ENCODE measurements at regions of chr1 and their contacts with region 1.

Region 1: DNA sequence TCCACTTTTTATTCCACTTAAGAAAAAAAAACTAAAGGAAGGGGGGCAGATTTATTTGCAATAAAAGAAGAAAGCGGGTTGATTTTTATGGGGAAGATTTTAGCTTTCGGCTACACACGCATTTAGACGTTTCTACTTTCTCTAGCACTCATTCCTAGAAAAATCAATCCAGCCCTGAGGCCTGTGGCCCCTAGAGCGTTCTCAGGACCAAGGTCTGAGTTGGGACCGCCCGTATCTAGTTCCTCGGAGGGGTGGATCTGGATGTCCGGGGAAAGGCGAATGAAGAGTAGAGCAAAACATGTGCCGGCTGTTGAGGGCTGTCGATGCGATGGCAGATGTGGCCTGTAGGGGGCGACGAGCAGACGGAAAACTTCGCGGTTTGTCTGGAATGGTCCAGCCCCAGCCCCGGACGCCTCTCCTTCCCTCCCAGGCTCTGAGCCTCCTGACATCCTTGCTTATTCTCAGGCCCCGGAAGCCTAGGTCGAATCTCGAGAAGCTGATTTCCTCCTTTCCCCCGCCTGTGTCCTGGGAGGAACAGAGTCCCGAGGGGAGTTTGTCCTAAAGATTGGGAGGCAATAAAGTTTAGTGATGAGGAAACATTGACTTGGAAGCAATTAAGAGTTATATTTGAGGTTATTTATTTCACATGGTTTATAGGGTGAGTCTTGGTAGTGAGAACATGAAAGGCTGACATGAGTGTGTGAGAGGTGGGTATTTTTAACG is 5.2 kb downstream of the FOXD3 start:
- DNase-seq: peak; percentile 62
- ATAC-seq: peak; percentile 87
- H3K4me3 ChIP-seq: no peak overlapping the region
- H3K27ac ChIP-seq: no peak overlapping the region
- H3K4me1 ChIP-seq: no peaks in the 10 kb centered on the region; the same call in 1 of the 2 replicates
- H3K27me3 ChIP-seq: peaks cover 80% of the 10 kb centered on the region
- CTCF ChIP-seq: peak; percentile 78
- POLR2A ChIP-seq: no peak
- RAD21 ChIP-seq: peak; percentile 57

Region 2: GRCh38 chr1:62953633-62954032 is 373.9 kb before region 1 on chr1:
- CTCF ChIA-PET with region 1: no interaction called
- POLR2A ChIA-PET with region 1: no interaction called
- dilution Hi-C with region 1: no loop called
- in situ Hi-C with region 1: no loop called
- intact Hi-C with region 1: no loop called
- DNase-seq: no peak
- ATAC-seq: no peak
- H3K4me3 ChIP-seq: no peak overlapping the region
- H3K27ac ChIP-seq: no peak overlapping the region
- H3K4me1 ChIP-seq: no peaks in the 10 kb centered on the region
- H3K27me3 ChIP-seq: peaks cover 3% of the 10 kb centered on the region; the same call in 1 of the 2 replicates
- CTCF ChIP-seq: no peak
- POLR2A ChIP-seq: no peak
- RAD21 ChIP-seq: no peak

Region 3: DNA sequence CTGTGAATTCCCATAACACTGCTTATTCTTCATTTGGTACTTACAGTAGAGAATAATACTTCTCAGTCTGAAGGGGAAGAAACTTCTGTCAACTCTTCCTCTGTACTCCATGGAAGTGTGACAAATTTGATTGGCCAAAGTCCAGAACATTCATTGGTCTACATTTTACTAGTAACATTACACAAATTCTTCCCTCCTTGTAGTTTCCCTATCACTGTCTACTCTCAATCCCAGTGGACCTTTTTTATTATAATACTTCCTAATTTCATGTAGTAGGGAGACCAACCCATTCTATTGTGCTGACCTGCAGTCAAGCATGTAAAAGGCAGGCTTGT is 114.5 kb after region 1 on chr1:
- CTCF ChIA-PET with region 1: interaction called, 8 read pairs
- POLR2A ChIA-PET with region 1: no interaction called
- dilution Hi-C with region 1: no loop called
- in situ Hi-C with region 1: no loop called
- intact Hi-C with region 1: loop called (anchors 2 kb)
- DNase-seq: peak; percentile 12
- ATAC-seq: peak; percentile 18; the same call in 1 of the 2 replicates
- H3K4me3 ChIP-seq: no peak overlapping the region
- H3K27ac ChIP-seq: no peak overlapping the region
- H3K4me1 ChIP-seq: peaks cover 2% of the 10 kb centered on the region; the same call in 1 of the 2 replicates
- H3K27me3 ChIP-seq: no peaks in the 10 kb centered on the region
- CTCF ChIP-seq: no peak
- POLR2A ChIP-seq: no peak
- RAD21 ChIP-seq: no peak

Region 4: DNA sequence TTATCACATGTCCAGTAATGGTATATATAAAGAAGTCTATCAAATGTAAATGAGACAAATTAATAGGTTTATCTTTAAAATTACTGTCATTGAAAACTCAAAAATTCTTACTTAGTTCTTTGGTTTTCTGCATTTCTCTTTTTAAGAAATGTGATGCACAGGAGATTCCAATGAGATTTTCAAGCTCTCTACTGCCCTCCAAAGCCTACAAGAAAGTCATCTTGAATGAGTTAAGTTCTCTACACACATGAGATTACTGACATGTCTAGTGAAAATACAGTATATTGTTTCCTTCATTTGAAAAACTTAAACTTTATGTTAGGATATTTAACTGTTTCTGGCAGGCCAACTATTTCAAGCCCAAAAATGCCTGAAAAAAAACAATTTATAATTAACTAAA is 126.7 kb after region 1 on chr1:
- CTCF ChIA-PET with region 1: no interaction called
- POLR2A ChIA-PET with region 1: no interaction called
- dilution Hi-C with region 1: no loop called
- in situ Hi-C with region 1: loop called (anchors 10 kb)
- intact Hi-C with region 1: no loop called
- DNase-seq: peak; percentile 43
- ATAC-seq: peak; percentile 69; the same call in 1 of the 2 replicates
- H3K4me3 ChIP-seq: no peak overlapping the region
- H3K27ac ChIP-seq: no peak overlapping the region
- H3K4me1 ChIP-seq: no peaks in the 10 kb centered on the region; the same call in 1 of the 2 replicates
- H3K27me3 ChIP-seq: no peaks in the 10 kb centered on the region
- CTCF ChIP-seq: peak; percentile 37
- POLR2A ChIP-seq: no peak
- RAD21 ChIP-seq: no peak

Region 5: GRCh38 chr1:63522891-63523728 is 195.5 kb after region 1 on chr1 and contains the starts of genes EFCAB7 and ITGB3BP:
- CTCF ChIA-PET with region 1: interaction called, 3 read pairs
- POLR2A ChIA-PET with region 1: no interaction called
- dilution Hi-C with region 1: no loop called
- in situ Hi-C with region 1: loop called (anchors 10 kb)
- intact Hi-C with region 1: loop called (anchors 5 kb)
- DNase-seq: peak; percentile 96
- ATAC-seq: peak; percentile 94
- H3K4me3 ChIP-seq: peak within 1 kb of the TSS; percentile 66
- H3K27ac ChIP-seq: peak within 1 kb of the TSS; percentile 85
- H3K4me1 ChIP-seq: no peaks in the 10 kb centered on the region
- H3K27me3 ChIP-seq: no peaks in the 10 kb centered on the region
- CTCF ChIP-seq: no peak
- POLR2A ChIP-seq: no peak; the same call in 1 of the 2 replicates
- RAD21 ChIP-seq: no peak
- total RNA-seq, gene EFCAB7: 2.3 and 6.7 TPM in 2 replicates
- total RNA-seq, gene ITGB3BP: 8.1 and 15.8 TPM in 2 replicates

Region 6: DNA sequence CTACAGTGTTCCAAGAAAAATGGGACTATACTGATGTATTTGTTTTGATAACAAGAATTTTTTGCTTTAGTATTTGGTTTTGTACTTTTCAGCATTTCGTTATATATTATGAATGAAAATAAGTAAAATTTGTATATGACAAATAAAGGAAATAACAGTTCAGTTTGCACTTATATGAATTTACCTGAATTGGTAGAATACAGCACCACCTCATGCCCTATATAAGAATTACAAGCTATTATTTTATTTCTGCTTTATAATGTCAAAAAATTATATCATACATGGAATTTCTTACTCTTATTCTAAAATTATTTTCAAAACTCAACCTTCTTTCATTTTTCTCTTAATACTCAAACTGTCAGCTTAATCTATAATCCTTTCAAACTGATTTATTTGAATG is 210.4 kb after region 1 on chr1:
- CTCF ChIA-PET with region 1: interaction called, 5 read pairs
- POLR2A ChIA-PET with region 1: no interaction called
- dilution Hi-C with region 1: no loop called
- in situ Hi-C with region 1: no loop called
- intact Hi-C with region 1: loop called (anchors 5 kb)
- DNase-seq: peak; percentile 15
- ATAC-seq: peak; percentile 66
- H3K4me3 ChIP-seq: no peak overlapping the region
- H3K27ac ChIP-seq: no peak overlapping the region
- H3K4me1 ChIP-seq: peaks cover 1% of the 10 kb centered on the region; the same call in 1 of the 2 replicates
- H3K27me3 ChIP-seq: no peaks in the 10 kb centered on the region
- CTCF ChIP-seq: peak; percentile 55
- POLR2A ChIP-seq: no peak
- RAD21 ChIP-seq: peak; percentile 60

Region 7: DNA sequence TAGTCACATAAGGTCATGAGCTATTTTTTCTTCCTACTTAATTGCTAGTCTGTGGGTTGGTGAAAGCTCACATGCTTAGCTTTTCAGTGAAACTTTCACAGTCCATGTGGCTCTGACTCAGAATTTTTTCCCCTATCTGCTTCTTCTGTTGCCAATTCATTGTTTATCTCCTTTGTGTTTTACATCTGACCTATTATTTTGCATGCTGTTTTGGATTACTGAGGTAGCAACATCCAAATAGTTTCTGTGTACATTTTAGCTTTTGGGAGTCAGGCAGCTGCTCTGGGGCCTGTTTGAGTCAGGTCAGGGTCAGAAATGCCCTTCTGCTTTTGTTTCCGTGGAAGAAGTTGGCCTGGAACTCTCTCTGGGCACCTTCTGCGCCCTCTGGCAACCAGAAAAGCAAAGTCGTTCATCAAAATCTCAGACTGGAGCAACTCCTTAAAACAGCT is 486.3 kb after region 1 on chr1:
- CTCF ChIA-PET with region 1: no interaction called
- POLR2A ChIA-PET with region 1: no interaction called
- dilution Hi-C with region 1: no loop called
- in situ Hi-C with region 1: no loop called
- intact Hi-C with region 1: no loop called
- DNase-seq: peak; percentile 70
- ATAC-seq: peak; percentile 35
- H3K4me3 ChIP-seq: no peak overlapping the region
- H3K27ac ChIP-seq: no peak overlapping the region
- H3K4me1 ChIP-seq: peaks cover 10% of the 10 kb centered on the region; the same call in 1 of the 2 replicates
- H3K27me3 ChIP-seq: peaks cover under 1% of the 10 kb centered on the region
- CTCF ChIP-seq: no peak
- POLR2A ChIP-seq: no peak
- RAD21 ChIP-seq: no peak